AG04449 (cell line): ENCODE measurements at regions of chr16 and their contacts with region 1.

Region 1: DNA sequence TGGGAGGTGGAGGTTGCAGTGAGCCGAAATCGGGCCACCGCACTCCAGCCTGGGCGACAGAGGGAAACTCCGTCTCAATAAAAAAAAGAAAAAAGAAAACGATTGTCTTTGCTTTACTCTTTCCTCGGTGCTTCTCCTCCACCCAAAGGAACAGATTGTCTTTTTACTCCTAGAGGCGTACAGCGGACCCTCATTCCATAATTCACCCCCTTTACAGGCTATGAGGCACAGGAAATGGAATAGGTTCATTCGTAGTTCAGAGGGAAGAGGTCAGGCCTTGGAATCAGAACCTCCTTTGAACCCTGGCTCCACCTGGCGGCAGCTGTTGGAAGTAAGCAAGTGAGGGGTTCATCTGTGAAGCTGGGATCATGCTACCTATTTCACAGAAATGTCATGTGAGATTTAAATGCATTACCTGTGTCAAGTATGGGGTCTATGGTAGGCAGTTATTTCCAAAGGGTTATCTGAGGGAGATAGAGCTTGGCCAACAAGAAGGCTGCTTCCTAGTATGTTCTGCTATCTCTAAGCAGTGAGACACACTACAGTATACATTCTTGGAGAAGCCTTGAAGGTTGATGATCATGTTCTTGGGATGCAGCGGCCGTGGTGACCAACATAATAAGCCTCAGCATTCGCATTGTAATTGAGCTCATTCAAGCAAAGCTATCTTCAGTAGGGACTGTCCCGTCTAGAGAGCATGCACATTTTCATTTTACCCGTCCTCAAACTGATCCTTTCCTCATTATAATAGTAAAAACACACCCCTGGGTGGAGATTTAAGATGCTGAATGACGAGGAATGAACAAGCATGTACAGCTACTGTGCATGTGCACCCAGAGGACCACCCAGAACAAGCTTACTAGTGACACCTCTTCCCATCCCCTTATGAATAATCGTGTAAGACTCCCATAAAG is 18.7 kb upstream of the ZNF689 start:
- DNase-seq: no peak
- H3K4me3 ChIP-seq: no peak overlapping the region
- CTCF ChIP-seq: peak; percentile 84

Region 2: DNA sequence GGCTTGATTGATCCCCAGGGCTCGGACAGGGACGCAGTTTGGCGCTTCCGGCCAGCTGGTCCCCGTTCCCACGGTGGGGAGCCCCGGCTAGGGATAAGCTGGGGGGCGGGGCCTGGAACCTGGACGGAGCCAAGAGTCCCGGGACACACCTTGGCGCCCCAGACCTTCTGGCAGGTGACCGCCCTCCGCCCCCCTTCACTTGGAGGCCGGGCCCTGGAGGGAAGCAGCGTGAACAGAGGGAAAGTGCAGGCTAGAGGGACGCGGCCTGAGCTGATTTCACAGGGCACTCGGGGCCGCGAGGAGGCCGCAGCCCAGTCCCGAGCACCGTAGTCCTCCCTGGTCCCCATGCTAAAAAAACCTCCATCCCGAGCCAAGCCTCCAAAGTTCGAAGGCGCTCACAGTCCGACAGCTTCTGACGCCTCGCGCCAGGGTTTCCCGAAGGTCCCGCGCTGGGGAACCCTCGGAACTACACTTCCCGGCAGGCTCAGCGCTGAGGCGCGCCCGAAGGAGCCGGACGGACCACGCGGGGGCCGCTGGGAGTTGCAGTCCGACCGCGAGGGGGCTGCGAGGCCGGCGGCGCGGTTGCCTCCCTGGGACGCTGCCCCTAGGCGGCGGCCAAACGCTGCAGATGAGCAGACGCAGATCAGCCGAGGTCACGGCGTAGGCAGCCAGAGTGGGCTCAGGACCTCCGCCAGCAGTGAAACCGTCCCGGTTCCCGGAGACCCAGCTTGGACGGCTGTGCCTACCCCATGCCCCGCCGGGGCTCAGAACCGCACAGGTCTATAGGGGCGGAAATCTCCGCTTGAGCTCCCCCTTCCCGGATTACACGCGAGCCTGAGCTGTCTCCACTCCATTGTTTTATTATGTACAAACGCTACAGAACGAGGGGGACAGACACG is 537.2 kb before region 1 on chr16 and contains the start of gene TBX6:
- CTCF ChIA-PET with region 1: interaction called, 12 read pairs
- POLR2A ChIA-PET with region 1: no interaction called
- DNase-seq: peak; percentile 16
- H3K4me3 ChIP-seq: peak within 1 kb of the TSS; percentile 56
- CTCF ChIP-seq: peak; percentile 84

Region 3: DNA sequence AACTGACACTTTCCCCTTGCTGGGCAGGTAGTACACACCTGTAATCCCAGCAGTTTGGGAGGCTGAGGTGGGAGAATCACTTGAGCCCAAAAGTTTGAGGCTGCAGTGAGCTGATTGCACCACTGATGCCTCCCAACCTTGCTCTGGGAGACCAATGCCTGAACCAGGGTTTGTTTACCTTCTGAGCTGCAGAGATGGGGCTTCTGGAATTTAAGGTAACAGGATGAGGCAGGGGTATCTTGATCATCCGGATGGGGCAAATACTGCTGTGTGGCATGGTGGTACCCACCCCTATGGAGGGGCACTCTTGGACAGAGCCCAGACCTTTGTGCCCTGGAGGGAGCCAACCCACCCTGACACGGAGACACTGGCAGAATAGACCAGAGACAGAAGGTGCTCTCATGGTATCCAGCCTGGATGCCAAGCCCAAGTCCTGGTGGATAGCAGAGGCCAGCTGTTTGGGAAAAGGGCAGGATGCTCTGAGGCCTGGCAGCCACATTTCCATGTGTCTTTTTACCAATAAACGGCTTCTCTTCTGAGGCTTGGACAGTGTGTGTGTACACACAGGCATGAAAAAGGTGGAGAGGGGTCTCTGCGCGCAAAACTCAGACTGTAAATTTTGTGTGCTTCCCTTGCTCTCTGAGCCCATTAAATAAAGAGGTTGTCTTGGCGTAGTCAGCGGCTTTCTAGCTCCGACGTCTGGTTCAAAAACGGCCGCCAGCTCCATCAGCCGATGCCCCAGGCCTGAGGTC is 229.3 kb before region 1 on chr16:
- CTCF ChIA-PET with region 1: no interaction called
- POLR2A ChIA-PET with region 1: no interaction called
- DNase-seq: no peak
- H3K4me3 ChIP-seq: peak overlapping the region; percentile 64
- CTCF ChIP-seq: no peak

Region 4: DNA sequence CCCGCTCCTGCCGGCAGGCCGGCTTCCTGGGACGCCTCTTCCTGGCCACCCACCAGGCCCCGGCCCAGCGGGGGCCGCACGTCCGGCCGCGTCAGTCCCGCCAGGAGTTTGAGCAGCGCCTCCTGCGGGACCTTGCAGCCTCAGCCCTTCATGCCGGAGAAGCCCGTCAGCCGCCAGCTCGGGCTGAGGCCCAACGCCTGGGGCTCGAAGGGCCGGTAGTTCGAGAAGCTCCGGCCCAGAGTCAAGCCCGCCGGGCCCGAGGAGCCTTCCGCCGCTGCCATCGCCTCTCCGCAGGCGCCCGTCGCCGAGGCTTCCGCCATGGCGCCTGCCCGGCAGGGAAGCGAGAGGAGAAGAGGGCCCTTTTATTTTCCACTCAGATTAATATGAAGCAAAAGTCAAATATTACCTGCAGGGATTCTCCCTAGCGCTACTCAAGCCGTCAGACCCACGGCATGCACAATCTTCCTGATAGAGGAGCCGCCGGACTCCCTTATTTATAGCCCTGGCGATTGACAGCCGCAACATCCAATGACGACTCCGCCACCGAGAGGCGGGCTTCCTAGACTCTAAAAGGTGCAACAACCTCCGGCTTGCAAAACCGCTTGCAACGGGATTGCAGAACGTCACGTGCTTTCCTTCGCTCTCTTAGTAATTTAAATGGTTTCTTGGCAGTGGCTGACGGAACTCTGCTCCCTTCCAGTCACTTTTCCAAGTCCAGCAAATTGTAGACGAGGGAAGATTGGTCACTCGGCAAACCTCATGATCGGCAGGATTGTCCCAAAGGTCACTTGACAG is 183.3 kb before region 1 on chr16 and contains the start of gene SEPHS2:
- CTCF ChIA-PET with region 1: interaction called, 45 read pairs
- POLR2A ChIA-PET with region 1: no interaction called
- DNase-seq: peak; percentile 87
- H3K4me3 ChIP-seq: peak within 1 kb of the TSS; percentile 85
- CTCF ChIP-seq: peak; percentile 71

Region 5: GRCh38 chr16:30557957-30558788 is 70.7 kb before region 1 on chr16 and contains the start of gene ZNF764:
- CTCF ChIA-PET with region 1: interaction called, 12 read pairs
- POLR2A ChIA-PET with region 1: no interaction called
- DNase-seq: peak; percentile 71
- H3K4me3 ChIP-seq: peak within 1 kb of the TSS; percentile 76
- CTCF ChIP-seq: no peak

Region 6: GRCh38 chr16:30602616-30603277 is 26.1 kb before region 1 on chr16:
- CTCF ChIA-PET with region 1: interaction called, 11 read pairs
- POLR2A ChIA-PET with region 1: interaction called, 6 read pairs
- DNase-seq: no peak
- H3K4me3 ChIP-seq: no peak overlapping the region
- CTCF ChIP-seq: no peak

Region 7: GRCh38 chr16:30615358-30616091 is 13.4 kb before region 1 on chr16:
- CTCF ChIA-PET with region 1: interaction called, 51 read pairs
- POLR2A ChIA-PET with region 1: interaction called, 3 read pairs
- DNase-seq: no peak
- H3K4me3 ChIP-seq: no peak overlapping the region
- CTCF ChIP-seq: peak; percentile 46